Ascending aorta (tissue), 2 donors: ENCODE measurements at regions of chr13 and their contacts with region 1.

Region 1: DNA sequence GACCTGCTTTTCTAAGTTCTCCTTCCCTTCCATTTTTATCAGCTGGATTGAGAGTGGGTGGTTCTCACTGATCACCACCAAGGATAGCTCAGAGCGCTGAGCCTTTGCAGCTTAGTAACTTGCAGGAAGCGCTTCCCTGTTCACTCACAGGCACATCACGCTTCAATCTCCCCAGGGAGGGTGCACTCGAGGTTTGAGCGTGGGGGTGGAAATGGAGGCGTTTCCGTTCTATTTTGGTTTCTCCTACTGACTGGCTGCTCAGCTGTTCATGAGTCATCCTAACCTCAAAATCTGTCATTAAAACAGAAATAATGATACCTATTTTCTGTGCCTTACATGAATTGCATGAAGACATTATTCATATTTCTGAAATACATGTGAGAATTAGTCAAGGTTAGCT is 292.1 kb downstream of the SPRY2 start:
- DNase-seq: peak; percentile 90 to 96
- H3K4me3 ChIP-seq: peak overlapping the region in 1 of 2 donors; percentile 28
- H3K27ac ChIP-seq: peak overlapping the region; percentile 54 to 70
- H3K4me1 ChIP-seq: peaks cover 7 to 16% of the 10 kb centered on the region in 2 donors
- H3K27me3 ChIP-seq: no peaks in the 10 kb centered on the region
- CTCF ChIP-seq: no peak

Region 2: DNA sequence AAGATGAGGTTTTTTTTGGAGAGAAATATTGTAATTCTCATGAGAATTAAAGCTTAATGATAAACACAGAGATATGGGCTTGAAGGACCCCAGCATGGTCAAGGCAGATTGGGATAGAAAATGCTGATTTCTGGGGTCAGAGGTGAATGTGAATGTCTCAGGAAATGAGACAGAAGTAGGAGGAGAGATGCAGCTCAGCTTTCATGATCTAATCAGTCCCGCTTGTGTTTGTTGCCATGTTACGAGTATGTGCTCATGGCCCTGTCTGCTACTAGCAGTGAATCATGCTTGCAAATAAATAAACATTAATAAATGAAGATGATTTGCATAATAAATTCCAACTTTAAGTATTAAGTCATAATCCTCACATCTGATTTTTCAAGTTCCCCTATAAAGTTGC is 590.9 kb before region 1 on chr13:
- intact Hi-C with region 1: no loop called
- DNase-seq: no peak
- H3K4me3 ChIP-seq: no peak overlapping the region
- H3K27ac ChIP-seq: no peak overlapping the region
- H3K4me1 ChIP-seq: no peaks in the 10 kb centered on the region
- H3K27me3 ChIP-seq: no peaks in the 10 kb centered on the region
- CTCF ChIP-seq: no peak

Region 3: GRCh38 chr13:79837741-79838450 is 210.9 kb before region 1 on chr13:
- intact Hi-C with region 1: no loop called
- DNase-seq: no peak
- H3K4me3 ChIP-seq: no peak overlapping the region
- H3K27ac ChIP-seq: no peak overlapping the region
- H3K4me1 ChIP-seq: no peaks in the 10 kb centered on the region
- H3K27me3 ChIP-seq: no peaks in the 10 kb centered on the region
- CTCF ChIP-seq: no peak

Region 4: GRCh38 chr13:80083853-80084676 is 35.3 kb after region 1 on chr13:
- intact Hi-C with region 1: loop called (anchors 5 kb)
- DNase-seq: no peak
- H3K4me3 ChIP-seq: peak overlapping the region in 1 of 2 donors; percentile 15
- H3K27ac ChIP-seq: peak overlapping the region; percentile 39 to 51
- H3K4me1 ChIP-seq: peaks cover 0 to 4% of the 10 kb centered on the region in 2 donors
- H3K27me3 ChIP-seq: no peaks in the 10 kb centered on the region
- CTCF ChIP-seq: no peak

Region 5: GRCh38 chr13:80132741-80133601 is 84.2 kb after region 1 on chr13:
- intact Hi-C with region 1: loop called (anchors 5 kb)
- DNase-seq: peak in 1 of 2 donors; percentile 86
- H3K4me3 ChIP-seq: peak overlapping the region; percentile 29 to 57
- H3K27ac ChIP-seq: peak overlapping the region; percentile 81 to 88
- H3K4me1 ChIP-seq: peaks cover 12 to 26% of the 10 kb centered on the region in 2 donors
- H3K27me3 ChIP-seq: no peaks in the 10 kb centered on the region
- CTCF ChIP-seq: no peak